PC-9 (cell line): ENCODE measurements at regions of chr12 and their contacts with region 1.

Region 1: DNA sequence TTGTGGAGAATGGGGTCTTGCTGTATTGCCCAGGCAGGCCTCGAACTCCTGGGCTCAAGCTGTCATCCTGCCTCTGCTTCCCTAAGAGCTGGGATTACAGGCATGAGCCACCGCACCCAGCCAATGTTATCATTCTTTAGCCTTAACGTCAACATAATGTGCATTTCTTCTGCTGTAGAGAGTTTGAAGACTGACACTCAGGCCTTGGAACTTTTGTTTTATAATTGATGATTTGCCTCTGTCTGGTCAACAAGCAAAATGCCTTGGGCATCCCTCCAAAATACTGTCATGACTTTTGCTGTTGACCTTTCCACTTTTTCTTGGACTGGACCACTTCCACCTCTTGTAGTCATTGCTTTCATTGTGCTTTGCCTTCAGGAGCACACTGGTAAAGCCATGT is 29.0 kb downstream of the FAM234B start:
- DNase-seq: no peak
- H3K4me3 ChIP-seq: no peak overlapping the region
- H3K27ac ChIP-seq: no peak overlapping the region
- H3K4me1 ChIP-seq: no peaks in the 10 kb centered on the region
- H3K27me3 ChIP-seq: no peaks in the 10 kb centered on the region
- CTCF ChIP-seq: no peak

Region 2: GRCh38 chr12:13023811-13024530 is 49.2 kb before region 1 on chr12:
- CTCF ChIA-PET with region 1: no interaction called
- POLR2A ChIA-PET with region 1: no interaction called
- intact Hi-C with region 1: no loop called
- DNase-seq: peak; percentile 54 to 57
- H3K4me3 ChIP-seq: no peak overlapping the region
- H3K27ac ChIP-seq: no peak overlapping the region
- H3K4me1 ChIP-seq: no peaks in the 10 kb centered on the region
- H3K27me3 ChIP-seq: no peaks in the 10 kb centered on the region
- CTCF ChIP-seq: peak; percentile 69

Region 3: GRCh38 chr12:13038491-13039161 is 34.5 kb before region 1 on chr12:
- CTCF ChIA-PET with region 1: no interaction called
- POLR2A ChIA-PET with region 1: no interaction called
- intact Hi-C with region 1: no loop called
- DNase-seq: no peak
- H3K4me3 ChIP-seq: no peak overlapping the region
- H3K27ac ChIP-seq: no peak overlapping the region
- H3K4me1 ChIP-seq: 0 out of 2 replicates have a peak, but pooled peaks cover 7% of the 10 kb centered on the region
- H3K27me3 ChIP-seq: no peaks in the 10 kb centered on the region
- CTCF ChIP-seq: no peak

Region 4: GRCh38 chr12:13144266-13144828 is 71.2 kb after region 1 on chr12:
- CTCF ChIA-PET with region 1: no interaction called
- POLR2A ChIA-PET with region 1: no interaction called
- intact Hi-C with region 1: no loop called
- DNase-seq: no peak
- H3K4me3 ChIP-seq: no peak overlapping the region
- H3K27ac ChIP-seq: no peak overlapping the region
- H3K4me1 ChIP-seq: peaks cover 38% of the 10 kb centered on the region
- H3K27me3 ChIP-seq: no peaks in the 10 kb centered on the region
- CTCF ChIP-seq: no peak

Region 5: DNA sequence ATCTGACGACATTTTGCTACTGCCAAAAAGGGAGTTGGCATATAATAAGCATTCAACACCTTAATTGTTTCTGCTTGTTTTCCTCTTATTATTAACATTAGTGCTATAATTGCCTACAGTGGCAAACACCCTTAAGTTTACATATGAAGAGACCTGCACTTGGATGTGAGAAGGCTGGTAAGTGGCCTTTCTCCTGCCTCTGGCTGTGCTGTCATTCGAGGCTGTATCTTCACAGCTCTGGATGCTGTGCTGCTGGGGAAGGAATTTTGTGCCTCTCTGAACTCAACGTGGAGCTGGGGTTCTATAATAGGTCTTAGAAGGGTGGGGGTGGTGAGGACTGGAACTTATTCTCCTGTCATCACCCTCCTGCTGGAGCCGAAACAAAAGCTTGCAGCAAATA is 509.2 kb after region 1 on chr12:
- CTCF ChIA-PET with region 1: no interaction called
- POLR2A ChIA-PET with region 1: interaction called, 10 read pairs
- intact Hi-C with region 1: no loop called
- DNase-seq: no peak
- H3K4me3 ChIP-seq: no peak overlapping the region
- H3K27ac ChIP-seq: no peak overlapping the region
- H3K4me1 ChIP-seq: peaks cover 12% of the 10 kb centered on the region
- H3K27me3 ChIP-seq: no peaks in the 10 kb centered on the region
- CTCF ChIP-seq: no peak